B cell (primary cell): ENCODE measurements at regions of chr12 and their contacts with region 1.

Region 1: DNA sequence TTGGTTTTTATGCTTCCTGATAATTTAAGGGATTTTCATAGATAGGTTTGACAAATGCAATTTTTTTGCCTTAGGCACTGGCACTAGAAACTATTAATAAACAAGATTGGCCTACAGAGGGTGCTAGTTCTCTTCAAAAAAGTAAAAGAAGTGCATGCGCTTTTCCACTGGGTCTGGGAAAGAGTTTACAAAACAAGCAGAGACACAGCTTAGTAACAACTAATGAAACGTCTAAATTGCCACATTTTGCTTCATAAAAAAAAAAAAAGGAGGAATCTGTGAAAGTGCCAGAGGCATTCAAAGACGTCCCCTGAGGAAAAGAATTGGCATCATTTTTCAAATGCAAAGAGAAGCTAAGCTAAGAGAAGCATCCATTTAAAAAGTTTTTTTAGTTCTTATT is 58.3 kb upstream of the EEA1 start:
- DNase-seq: peak; percentile 72
- ATAC-seq: peak; percentile 37
- H3K4me3 ChIP-seq: peak overlapping the region in 4 of 5 experiments; percentile 12 to 57 (median 34)
- H3K4me3 Mint-ChIP-seq: peak overlapping the region; percentile 80
- H3K27ac ChIP-seq: peak overlapping the region; percentile 66 to 77
- H3K27ac Mint-ChIP-seq: peak overlapping the region; percentile 92
- H3K4me1 ChIP-seq: peaks cover 21 to 31% of the 10 kb centered on the region in 2 donors
- H3K4me1 Mint-ChIP-seq: peaks cover 30% of the 10 kb centered on the region
- H3K27me3 ChIP-seq: no peaks in the 10 kb centered on the region
- H3K27me3 Mint-ChIP-seq: no peaks in the 10 kb centered on the region
- CTCF ChIP-seq: peak; percentile 81

Region 2: GRCh38 chr12:92928962-92929915 is 58.1 kb before region 1 on chr12 and contains the start of gene EEA1:
- CTCF ChIA-PET with region 1: interaction called, 29 read pairs
- POLR2A ChIA-PET with region 1: interaction called, 7 read pairs
- intact Hi-C with region 1: no loop called
- DNase-seq: peak; percentile 97
- ATAC-seq: peak; percentile 82
- H3K4me3 ChIP-seq: peak within 1 kb of the TSS; percentile 64 to 91 (median 79)
- H3K4me3 Mint-ChIP-seq: peak within 1 kb of the TSS; percentile 96
- H3K27ac ChIP-seq: peak within 1 kb of the TSS; percentile 90 to 96
- H3K27ac Mint-ChIP-seq: peak within 1 kb of the TSS; percentile 96
- H3K4me1 ChIP-seq: peaks cover 23 to 24% of the 10 kb centered on the region in 2 donors
- H3K4me1 Mint-ChIP-seq: peaks cover 34% of the 10 kb centered on the region
- H3K27me3 ChIP-seq: no peaks in the 10 kb centered on the region
- H3K27me3 Mint-ChIP-seq: no peaks in the 10 kb centered on the region
- CTCF ChIP-seq: no peak
- total RNA-seq, gene EEA1: 24.4 and 26.3 TPM in 2 replicates

Region 3: GRCh38 chr12:93008044-93008778 is 20.8 kb after region 1 on chr12:
- CTCF ChIA-PET with region 1: interaction called, 18 read pairs
- POLR2A ChIA-PET with region 1: no interaction called
- intact Hi-C with region 1: no loop called
- DNase-seq: no peak
- ATAC-seq: no peak
- H3K4me3 ChIP-seq: no peak overlapping the region
- H3K4me3 Mint-ChIP-seq: no peak overlapping the region
- H3K27ac ChIP-seq: no peak overlapping the region
- H3K27ac Mint-ChIP-seq: no peak overlapping the region
- H3K4me1 ChIP-seq: no peaks in the 10 kb centered on the region
- H3K4me1 Mint-ChIP-seq: peaks cover 3% of the 10 kb centered on the region
- H3K27me3 ChIP-seq: no peaks in the 10 kb centered on the region
- H3K27me3 Mint-ChIP-seq: no peaks in the 10 kb centered on the region
- CTCF ChIP-seq: no peak

Region 4: DNA sequence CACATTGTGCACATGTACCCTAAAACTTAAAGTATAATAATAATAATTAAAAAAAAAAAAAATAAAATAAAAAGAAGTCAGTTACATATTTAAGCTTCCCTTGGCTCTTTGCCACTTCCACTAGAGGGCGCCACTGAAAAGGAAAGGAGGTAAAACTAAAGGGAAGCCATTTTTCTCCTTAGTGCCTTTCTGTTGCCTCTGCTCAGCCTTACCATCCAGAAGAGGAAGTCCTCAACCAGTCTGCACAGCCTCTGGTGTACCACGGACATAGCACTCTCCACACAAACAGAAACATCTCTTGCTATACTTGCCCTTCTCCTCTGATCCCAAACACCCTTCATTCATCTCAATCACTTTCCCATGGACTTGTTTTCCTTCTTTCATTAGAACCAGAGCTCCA is 110.7 kb after region 1 on chr12:
- CTCF ChIA-PET with region 1: interaction called, 45 read pairs
- POLR2A ChIA-PET with region 1: no interaction called
- intact Hi-C with region 1: loop called (anchors 2 kb)
- DNase-seq: peak; percentile 90
- ATAC-seq: peak; percentile 97
- H3K4me3 ChIP-seq: no peak overlapping the region
- H3K4me3 Mint-ChIP-seq: peak overlapping the region; percentile 36
- H3K27ac ChIP-seq: no peak overlapping the region
- H3K27ac Mint-ChIP-seq: peak overlapping the region; percentile 73
- H3K4me1 ChIP-seq: peaks cover 13 to 14% of the 10 kb centered on the region in 2 donors
- H3K4me1 Mint-ChIP-seq: peaks cover 22% of the 10 kb centered on the region
- H3K27me3 ChIP-seq: no peaks in the 10 kb centered on the region
- H3K27me3 Mint-ChIP-seq: no peaks in the 10 kb centered on the region
- CTCF ChIP-seq: peak; percentile 83

Region 5: GRCh38 chr12:93397412-93397811 is 410.1 kb after region 1 on chr12:
- CTCF ChIA-PET with region 1: interaction called, 93 read pairs
- POLR2A ChIA-PET with region 1: interaction called, 6 read pairs
- intact Hi-C with region 1: loop called (anchors 2 kb)
- DNase-seq: no peak
- ATAC-seq: no peak
- H3K4me3 ChIP-seq: no peak overlapping the region
- H3K4me3 Mint-ChIP-seq: no peak overlapping the region
- H3K27ac ChIP-seq: no peak overlapping the region
- H3K27ac Mint-ChIP-seq: no peak overlapping the region
- H3K4me1 ChIP-seq: no peaks in the 10 kb centered on the region
- H3K4me1 Mint-ChIP-seq: peaks cover 9% of the 10 kb centered on the region
- H3K27me3 ChIP-seq: no peaks in the 10 kb centered on the region
- H3K27me3 Mint-ChIP-seq: no peaks in the 10 kb centered on the region
- CTCF ChIP-seq: no peak

Region 6: DNA sequence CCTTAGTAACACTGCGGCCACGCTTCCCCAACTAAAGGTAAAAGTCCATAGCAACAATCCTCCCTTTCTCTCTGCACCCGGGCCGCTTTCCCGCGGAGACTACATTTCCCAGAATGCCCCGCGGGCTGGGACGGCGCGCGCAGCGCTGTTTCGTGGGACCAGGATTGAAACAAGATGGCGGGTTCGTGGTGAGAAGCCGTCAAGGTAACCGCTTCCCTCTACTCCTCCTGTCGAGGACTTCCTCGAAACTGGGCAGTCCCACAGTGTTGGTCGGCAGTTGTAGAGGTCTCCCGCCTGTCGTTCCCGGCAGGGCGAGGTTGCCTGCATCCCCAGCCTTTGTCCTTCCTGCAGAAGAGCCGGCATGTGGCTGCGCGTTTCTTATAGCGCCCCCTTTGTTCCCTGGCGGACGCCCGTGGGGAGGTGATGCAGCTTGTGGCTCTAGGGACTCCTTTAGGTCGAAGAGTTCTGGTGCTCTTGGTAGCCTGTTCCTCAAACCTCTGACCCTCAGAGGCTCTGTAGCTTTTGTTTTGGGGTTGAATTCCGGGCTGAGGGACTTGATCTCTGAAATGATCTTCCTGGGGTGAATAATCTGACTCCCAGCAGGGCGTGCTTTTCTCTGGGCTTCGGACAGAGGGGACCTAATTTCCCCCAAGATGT is 480.1 kb after region 1 on chr12 and contains the start of gene MRPL42:
- CTCF ChIA-PET with region 1: interaction called, 6 read pairs
- POLR2A ChIA-PET with region 1: interaction called, 5 read pairs
- intact Hi-C with region 1: loop called (anchors 1 kb)
- DNase-seq: peak; percentile 95
- ATAC-seq: peak; percentile 93
- H3K4me3 ChIP-seq: peak within 1 kb of the TSS; percentile 64 to 82 (median 78)
- H3K4me3 Mint-ChIP-seq: peak within 1 kb of the TSS; percentile 95
- H3K27ac ChIP-seq: peak within 1 kb of the TSS; percentile 60 to 80
- H3K27ac Mint-ChIP-seq: peak within 1 kb of the TSS; percentile 95
- H3K4me1 ChIP-seq: peaks cover 12 to 17% of the 10 kb centered on the region in 2 donors
- H3K4me1 Mint-ChIP-seq: peaks cover 28% of the 10 kb centered on the region
- H3K27me3 ChIP-seq: no peaks in the 10 kb centered on the region
- H3K27me3 Mint-ChIP-seq: no peaks in the 10 kb centered on the region
- CTCF ChIP-seq: peak; percentile 83
- total RNA-seq, gene MRPL42: 41.9 and 45.2 TPM in 2 replicates